IMR-90 (cell line): ENCODE measurements at regions of chr9 and their contacts with region 1.

Region 1: DNA sequence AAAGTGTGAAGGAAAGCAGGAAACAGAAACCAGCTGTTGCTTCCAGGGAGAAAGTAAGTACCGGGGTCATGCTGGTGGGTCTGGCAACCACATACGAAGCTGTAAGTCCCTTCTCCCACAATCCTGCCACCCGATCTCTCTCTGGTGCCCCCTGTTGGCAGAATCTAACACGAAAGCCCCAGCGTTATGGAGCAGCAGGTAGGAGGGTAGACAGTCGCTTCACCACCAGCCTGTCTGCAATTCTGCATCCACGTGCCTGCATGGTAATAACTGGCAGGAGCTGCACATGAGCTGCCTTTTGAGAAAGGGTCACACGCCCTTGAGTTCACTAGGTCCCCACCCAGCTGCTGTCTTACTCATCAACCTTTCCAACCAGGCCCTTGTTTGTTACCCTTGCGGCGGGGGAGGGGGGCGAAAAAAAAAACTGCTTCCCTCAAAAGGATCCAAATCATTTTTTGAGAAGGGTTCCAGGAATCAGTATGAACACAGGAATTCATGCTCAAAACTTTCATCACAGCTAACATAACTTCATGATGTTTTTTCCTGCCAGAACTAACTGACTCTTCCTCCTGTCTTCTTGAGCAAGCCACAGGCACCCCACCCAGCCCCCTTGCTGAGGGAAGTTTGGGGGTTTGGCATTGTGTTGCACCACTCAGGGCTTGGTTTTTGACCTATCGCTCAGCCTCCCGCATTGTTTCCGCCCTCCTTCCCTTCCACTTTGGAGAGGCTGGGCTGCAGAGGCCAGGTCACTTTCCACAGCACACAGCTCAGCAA is 19.6 kb upstream of the TMEM252 start:
- DNase-seq: peak; percentile 84
- ATAC-seq: peak; percentile 95
- H3K4me3 ChIP-seq: no peak overlapping the region
- H3K27ac ChIP-seq: peak overlapping the region; percentile 33
- H3K4me1 ChIP-seq: peaks cover 8% of the 10 kb centered on the region; the same call in 1 of the 2 replicates
- H3K27me3 ChIP-seq: no peaks in the 10 kb centered on the region
- CTCF ChIP-seq: peak; percentile 35
- POLR2A ChIP-seq: no peak
- RAD21 ChIP-seq: 0 out of 2 replicates have a peak, but pooled peaks have one; percentile 10

Region 2: GRCh38 chr9:68462105-68462775 is 98.0 kb before region 1 on chr9:
- CTCF ChIA-PET with region 1: no interaction called
- POLR2A ChIA-PET with region 1: no interaction called
- dilution Hi-C with region 1: no loop called
- in situ Hi-C with region 1: no loop called
- intact Hi-C with region 1: loop called (anchors 10 kb)
- DNase-seq: no peak
- ATAC-seq: no peak
- H3K4me3 ChIP-seq: no peak overlapping the region
- H3K27ac ChIP-seq: no peak overlapping the region
- H3K4me1 ChIP-seq: peaks cover 5% of the 10 kb centered on the region; the same call in 1 of the 2 replicates
- H3K27me3 ChIP-seq: no peaks in the 10 kb centered on the region
- CTCF ChIP-seq: no peak
- POLR2A ChIP-seq: no peak
- RAD21 ChIP-seq: no peak

Region 3: DNA sequence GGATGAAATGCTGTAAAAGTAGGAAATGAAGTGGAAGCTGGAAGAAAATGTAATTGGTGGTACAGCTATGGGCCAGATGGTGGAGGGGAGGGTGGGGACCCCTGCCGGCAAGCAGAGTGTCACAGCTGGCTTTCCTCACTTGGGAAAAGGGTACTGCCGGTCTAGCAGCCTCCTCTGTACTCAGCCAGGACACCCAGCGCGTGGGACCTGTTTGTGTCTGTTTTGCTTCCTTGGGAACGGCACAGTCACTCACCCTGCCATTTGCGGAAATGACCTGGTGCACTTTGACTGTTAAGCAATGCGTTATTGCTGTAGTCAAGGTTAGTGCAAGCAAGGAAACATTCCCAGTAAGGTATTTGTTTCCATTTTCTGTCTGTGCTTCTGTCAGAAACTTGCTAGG is 29.6 kb before region 1 on chr9:
- CTCF ChIA-PET with region 1: no interaction called
- POLR2A ChIA-PET with region 1: no interaction called
- dilution Hi-C with region 1: no loop called
- in situ Hi-C with region 1: no loop called
- intact Hi-C with region 1: no loop called
- DNase-seq: peak; percentile 19
- ATAC-seq: no peak
- H3K4me3 ChIP-seq: no peak overlapping the region
- H3K27ac ChIP-seq: no peak overlapping the region
- H3K4me1 ChIP-seq: no peaks in the 10 kb centered on the region
- H3K27me3 ChIP-seq: no peaks in the 10 kb centered on the region
- CTCF ChIP-seq: 0 out of 2 replicates have a peak, but pooled peaks have one; percentile 11
- POLR2A ChIP-seq: no peak
- RAD21 ChIP-seq: no peak